IMR-90 (cell line): ENCODE measurements at regions of chr5 and their contacts with region 1.

Region 1: DNA sequence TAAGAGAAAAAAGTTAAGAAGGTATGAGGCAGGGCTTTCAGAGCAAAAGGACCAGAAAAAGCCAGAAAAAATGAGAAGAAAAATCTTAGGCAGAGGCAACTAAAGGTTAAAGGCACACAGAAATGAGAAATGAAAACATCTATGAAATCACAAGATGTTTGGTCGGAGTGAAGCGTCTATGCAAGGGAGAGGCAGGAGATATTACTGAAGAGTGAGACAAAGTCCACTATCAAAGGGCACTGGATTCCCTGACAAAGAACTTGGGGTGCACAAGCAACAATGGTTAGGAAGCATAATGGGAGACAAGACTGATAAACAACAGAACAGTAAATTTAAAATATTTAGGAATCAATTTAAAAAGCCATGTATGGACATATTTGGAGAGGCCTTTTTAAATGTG is 16.9 kb downstream of the PANK3 start:
- DNase-seq: no peak
- ATAC-seq: no peak
- H3K4me3 ChIP-seq: no peak overlapping the region
- H3K27ac ChIP-seq: no peak overlapping the region
- H3K4me1 ChIP-seq: no peaks in the 10 kb centered on the region
- H3K27me3 ChIP-seq: no peaks in the 10 kb centered on the region
- CTCF ChIP-seq: no peak
- POLR2A ChIP-seq: no peak
- RAD21 ChIP-seq: no peak

Region 2: DNA sequence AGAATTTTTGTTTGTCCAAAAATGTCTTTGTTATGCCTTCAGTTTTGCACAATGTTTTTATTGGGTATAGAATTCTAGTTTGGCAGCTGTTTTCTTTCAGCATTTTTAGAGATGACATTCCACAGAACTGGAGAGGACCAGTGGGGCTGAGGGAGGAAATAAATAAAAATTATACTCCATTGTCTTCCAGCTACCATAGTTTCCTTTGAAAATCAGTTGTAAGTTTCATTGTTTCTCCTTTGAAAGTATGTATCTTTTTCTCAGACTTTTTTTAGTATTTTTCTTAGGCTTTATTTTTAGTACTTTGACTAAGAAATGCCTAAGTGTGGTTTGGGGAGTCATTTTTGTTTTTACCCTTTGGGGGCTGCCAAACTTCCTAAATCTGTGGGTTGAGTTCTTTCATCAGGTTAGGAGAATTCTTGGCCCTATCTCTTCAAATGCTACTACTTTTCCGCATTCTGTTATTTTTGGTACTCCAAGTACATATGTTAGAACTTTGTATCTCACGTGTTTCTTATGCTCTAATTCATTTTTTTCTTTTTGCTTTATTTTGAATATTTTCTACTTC is 48.3 kb before region 1 on chr5:
- CTCF ChIA-PET with region 1: no interaction called
- POLR2A ChIA-PET with region 1: no interaction called
- dilution Hi-C with region 1: no loop called
- in situ Hi-C with region 1: no loop called
- intact Hi-C with region 1: loop called (anchors 5 kb)
- DNase-seq: no peak
- ATAC-seq: no peak
- H3K4me3 ChIP-seq: no peak overlapping the region
- H3K27ac ChIP-seq: no peak overlapping the region
- H3K4me1 ChIP-seq: no peaks in the 10 kb centered on the region
- H3K27me3 ChIP-seq: no peaks in the 10 kb centered on the region
- CTCF ChIP-seq: no peak
- POLR2A ChIP-seq: no peak
- RAD21 ChIP-seq: no peak